Stomach (tissue), 19 donors: ENCODE measurements at regions of chr12 and their contacts with region 1.

Region 1: GRCh38 chr12:8949342-8950220 is at the start of gene M6PR:
- DNase-seq: peak; percentile 90 to 97
- H3K4me3 ChIP-seq: peak within 1 kb of the TSS; percentile 62 to 85 (median 79)
- H3K27ac ChIP-seq: peak within 1 kb of the TSS; percentile 95 to 99 (median 97)
- H3K4me1 ChIP-seq: peaks cover 13 to 43% (median 35%) of the 10 kb centered on the region in 4 donors
- H3K27me3 ChIP-seq: no peaks in the 10 kb centered on the region
- CTCF ChIP-seq: peak in 3 of 7 experiments; percentile 24 to 50 (median 35)
- EP300 ChIP-seq: no peak
- POLR2A ChIP-seq: peak in 2 of 4 donors; percentile 22 to 25
- total RNA-seq, gene M6PR: 33.3 to 155 (median 66.9) TPM

Region 2: GRCh38 chr12:8771072-8771471 is 178.5 kb before region 1 on chr12:
- intact Hi-C with region 1: no loop called
- DNase-seq: no peak
- H3K4me3 ChIP-seq: no peak overlapping the region
- H3K27ac ChIP-seq: no peak overlapping the region
- H3K4me1 ChIP-seq: no peaks in the 10 kb centered on the region
- H3K27me3 ChIP-seq: no peaks in the 10 kb centered on the region
- CTCF ChIP-seq: no peak
- EP300 ChIP-seq: no peak
- POLR2A ChIP-seq: no peak

Region 3: DNA sequence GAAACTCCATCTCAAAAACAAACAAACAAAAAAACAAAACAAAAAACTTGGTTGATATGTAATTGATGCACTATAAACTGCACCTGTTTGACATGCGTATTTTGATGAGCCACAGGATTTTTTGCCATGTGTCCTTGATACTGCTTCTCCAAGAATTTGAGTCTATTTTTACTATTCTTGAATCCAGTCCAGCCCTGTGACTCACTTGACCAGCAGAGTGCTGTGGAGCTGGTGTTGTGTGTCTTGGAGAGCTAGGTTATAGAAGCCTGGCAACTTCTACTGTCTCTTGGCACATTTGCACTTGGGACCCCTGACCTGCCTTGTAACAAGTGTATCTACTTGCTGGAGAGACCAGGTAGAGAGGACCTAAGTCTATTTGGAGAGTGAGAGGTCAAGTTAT is 91.7 kb after region 1 on chr12:
- intact Hi-C with region 1: loop called (anchors 5 kb)
- DNase-seq: no peak
- H3K4me3 ChIP-seq: no peak overlapping the region
- H3K27ac ChIP-seq: no peak overlapping the region
- H3K4me1 ChIP-seq: no peaks in the 10 kb centered on the region
- H3K27me3 ChIP-seq: no peaks in the 10 kb centered on the region
- CTCF ChIP-seq: no peak
- EP300 ChIP-seq: no peak
- POLR2A ChIP-seq: no peak